ENCODE measurements at regions of chr5 and their contacts with region 1.

Region 1: GRCh38 chr5:150129813-150130492 is 25.7 kb downstream of the PDGFRB start:
- DNase-seq: peak; percentile 80 to 88 (median 86)
- H3K4me3 ChIP-seq: no peak overlapping the region
- H3K27ac ChIP-seq: peak overlapping the region in 1 of 2 donors; percentile 1
- H3K4me1 ChIP-seq: peaks cover 9% of the 10 kb centered on the region
- H3K27me3 ChIP-seq: no peaks in the 10 kb centered on the region
- CTCF ChIP-seq: peak; percentile 84 to 96 (median 96)
- EP300 ChIP-seq: no peak
- POLR2A ChIP-seq: no peak

Region 2: DNA sequence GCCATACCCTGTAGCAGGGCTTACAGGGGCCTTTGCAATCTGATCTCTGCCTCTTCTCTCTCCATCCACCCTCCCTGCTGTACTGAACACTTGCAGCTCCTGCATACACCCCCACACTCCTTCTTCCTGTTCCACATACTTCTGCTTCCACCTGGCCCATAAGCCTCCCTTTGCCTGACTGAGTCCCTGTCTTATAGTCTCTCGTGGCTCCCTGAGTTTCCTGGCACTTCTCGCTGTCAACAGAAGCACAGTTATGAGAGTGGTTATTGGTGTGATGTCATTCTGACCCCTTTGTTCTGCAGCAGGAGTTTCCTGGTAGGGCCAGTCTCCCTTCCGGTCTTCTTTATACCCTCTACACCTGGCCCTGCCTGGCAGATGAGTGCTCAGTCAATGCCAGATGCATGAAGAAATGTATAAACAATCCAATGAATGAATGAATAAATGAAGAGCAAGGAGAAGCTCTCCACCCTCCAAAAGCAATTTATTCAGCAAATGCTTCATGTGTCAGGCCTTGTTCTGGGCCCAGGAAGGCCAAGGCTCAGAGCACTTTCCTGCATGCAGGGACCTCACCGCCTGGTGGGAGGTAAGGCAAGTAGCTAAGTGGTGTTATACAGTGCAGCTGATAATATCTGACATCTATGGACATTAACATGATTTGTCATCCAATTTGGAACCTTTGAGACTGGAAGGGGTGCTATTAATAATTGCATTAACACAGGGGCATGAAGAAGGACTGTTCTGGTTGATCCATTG is 23.1 kb before region 1 on chr5:
- intact Hi-C with region 1: no loop called
- DNase-seq: peak in 1 of 5 donors; percentile 19
- H3K4me3 ChIP-seq: no peak overlapping the region
- H3K27ac ChIP-seq: no peak overlapping the region
- H3K4me1 ChIP-seq: no peaks in the 10 kb centered on the region
- H3K27me3 ChIP-seq: no peaks in the 10 kb centered on the region
- CTCF ChIP-seq: no peak
- EP300 ChIP-seq: no peak
- POLR2A ChIP-seq: no peak

Region 3: DNA sequence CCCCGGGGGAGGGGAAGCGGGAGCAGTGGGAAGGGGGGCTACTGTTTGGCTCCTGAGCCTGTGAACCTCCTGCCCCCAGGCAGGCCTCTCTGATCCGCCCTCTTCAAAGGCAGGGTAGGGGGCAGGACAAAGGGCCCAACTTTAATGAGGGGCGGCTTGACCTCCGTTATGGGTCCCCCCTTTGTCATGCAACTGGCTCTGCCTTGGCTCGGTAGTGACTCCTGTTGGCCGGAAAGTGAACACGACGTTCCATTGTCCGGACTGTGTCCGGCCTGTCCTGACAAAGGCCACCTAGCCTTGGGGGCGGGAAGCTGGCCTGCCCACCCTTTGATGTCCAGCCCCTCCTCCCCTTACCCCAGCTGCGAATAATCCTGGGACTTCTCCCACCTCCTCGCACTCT is 38.0 kb after region 1 on chr5:
- intact Hi-C with region 1: loop called in 3 of 4 experiments (anchors 5 kb)
- DNase-seq: no peak
- H3K4me3 ChIP-seq: no peak overlapping the region
- H3K27ac ChIP-seq: no peak overlapping the region
- H3K4me1 ChIP-seq: peaks cover 12% of the 10 kb centered on the region
- H3K27me3 ChIP-seq: no peaks in the 10 kb centered on the region
- CTCF ChIP-seq: no peak
- EP300 ChIP-seq: no peak
- POLR2A ChIP-seq: no peak

Region 4: GRCh38 chr5:150217873-150218692 is 88.1 kb after region 1 on chr5:
- intact Hi-C with region 1: loop called (anchors 1 to 2 kb)
- DNase-seq: peak; percentile 78 to 90 (median 88)
- H3K4me3 ChIP-seq: no peak overlapping the region
- H3K27ac ChIP-seq: no peak overlapping the region
- H3K4me1 ChIP-seq: peaks cover 2% of the 10 kb centered on the region
- H3K27me3 ChIP-seq: no peaks in the 10 kb centered on the region
- CTCF ChIP-seq: peak; percentile 64 to 96 (median 95)
- EP300 ChIP-seq: no peak
- POLR2A ChIP-seq: no peak

Region 5: DNA sequence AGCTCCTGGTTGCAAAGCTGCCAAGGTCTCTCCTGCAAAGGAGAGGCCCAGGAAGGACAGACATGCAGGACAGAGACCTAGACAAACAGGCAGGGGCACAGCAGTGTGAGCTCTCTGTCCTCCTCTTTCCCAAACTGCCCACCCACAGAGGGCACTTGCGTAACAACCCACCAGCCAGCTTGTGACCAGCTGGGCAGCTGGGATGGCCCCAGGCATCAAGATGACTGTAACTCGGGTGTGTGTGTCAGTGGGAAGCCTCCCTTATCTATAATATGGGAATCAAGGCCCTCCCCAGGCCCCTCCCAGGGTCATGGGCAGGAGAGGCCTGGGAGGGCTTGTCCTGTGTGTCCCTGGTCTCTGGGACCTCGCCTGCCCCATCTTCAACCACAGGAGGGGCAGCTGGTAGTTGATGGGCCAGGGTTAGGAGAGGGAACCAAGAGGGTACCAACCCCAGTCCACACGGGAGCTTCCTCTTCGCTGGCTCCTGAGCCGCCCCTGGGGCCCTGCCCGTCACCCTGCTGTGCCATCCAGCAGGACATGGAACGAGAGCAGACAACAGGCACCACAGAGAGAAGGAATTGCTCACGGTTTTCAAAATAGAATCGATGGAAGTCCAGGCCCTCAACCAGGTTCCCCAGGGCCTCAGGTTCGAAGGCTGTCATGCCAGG is 97.8 kb after region 1 on chr5:
- intact Hi-C with region 1: loop called in 1 of 4 experiments (anchors 2 kb)
- DNase-seq: no peak
- H3K4me3 ChIP-seq: no peak overlapping the region
- H3K27ac ChIP-seq: no peak overlapping the region
- H3K4me1 ChIP-seq: no peaks in the 10 kb centered on the region
- H3K27me3 ChIP-seq: no peaks in the 10 kb centered on the region
- CTCF ChIP-seq: no peak
- EP300 ChIP-seq: no peak
- POLR2A ChIP-seq: no peak

Region 6: DNA sequence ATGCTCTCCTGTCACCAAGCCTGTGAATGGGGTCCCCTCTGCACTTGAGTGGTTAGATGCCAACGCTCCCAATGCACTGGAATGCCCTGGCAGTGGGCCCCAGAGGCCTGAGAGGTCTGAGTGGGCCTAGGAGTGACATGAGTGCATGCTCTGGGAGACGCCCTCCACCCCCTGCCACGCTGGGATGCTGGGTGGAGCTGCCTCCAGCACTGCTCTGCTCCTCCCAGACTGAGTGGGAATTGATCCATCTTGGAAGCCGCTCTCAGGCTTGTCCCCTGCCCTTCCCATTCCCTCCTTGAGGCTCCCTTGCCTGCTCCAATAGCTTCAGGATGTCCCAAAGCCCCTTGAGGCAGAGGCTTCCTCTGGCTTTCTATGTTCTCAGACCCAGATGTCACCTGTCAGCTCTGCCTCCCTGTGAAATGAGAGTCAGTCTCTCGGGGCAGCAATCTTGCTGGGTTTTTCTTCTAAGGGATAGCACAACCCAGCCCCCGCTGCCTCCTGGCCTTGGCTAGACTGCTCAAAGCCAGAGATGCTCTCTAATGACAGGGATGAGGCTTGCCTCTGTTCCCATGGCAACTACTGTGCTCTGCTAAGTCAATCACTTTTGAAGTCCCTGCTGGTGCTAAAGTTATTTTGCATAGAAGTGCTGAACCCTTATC is 179.4 kb after region 1 on chr5:
- intact Hi-C with region 1: no loop called
- DNase-seq: no peak
- H3K4me3 ChIP-seq: no peak overlapping the region
- H3K27ac ChIP-seq: no peak overlapping the region
- H3K4me1 ChIP-seq: no peaks in the 10 kb centered on the region
- H3K27me3 ChIP-seq: no peaks in the 10 kb centered on the region
- CTCF ChIP-seq: no peak
- EP300 ChIP-seq: no peak
- POLR2A ChIP-seq: no peak

Region 7: DNA sequence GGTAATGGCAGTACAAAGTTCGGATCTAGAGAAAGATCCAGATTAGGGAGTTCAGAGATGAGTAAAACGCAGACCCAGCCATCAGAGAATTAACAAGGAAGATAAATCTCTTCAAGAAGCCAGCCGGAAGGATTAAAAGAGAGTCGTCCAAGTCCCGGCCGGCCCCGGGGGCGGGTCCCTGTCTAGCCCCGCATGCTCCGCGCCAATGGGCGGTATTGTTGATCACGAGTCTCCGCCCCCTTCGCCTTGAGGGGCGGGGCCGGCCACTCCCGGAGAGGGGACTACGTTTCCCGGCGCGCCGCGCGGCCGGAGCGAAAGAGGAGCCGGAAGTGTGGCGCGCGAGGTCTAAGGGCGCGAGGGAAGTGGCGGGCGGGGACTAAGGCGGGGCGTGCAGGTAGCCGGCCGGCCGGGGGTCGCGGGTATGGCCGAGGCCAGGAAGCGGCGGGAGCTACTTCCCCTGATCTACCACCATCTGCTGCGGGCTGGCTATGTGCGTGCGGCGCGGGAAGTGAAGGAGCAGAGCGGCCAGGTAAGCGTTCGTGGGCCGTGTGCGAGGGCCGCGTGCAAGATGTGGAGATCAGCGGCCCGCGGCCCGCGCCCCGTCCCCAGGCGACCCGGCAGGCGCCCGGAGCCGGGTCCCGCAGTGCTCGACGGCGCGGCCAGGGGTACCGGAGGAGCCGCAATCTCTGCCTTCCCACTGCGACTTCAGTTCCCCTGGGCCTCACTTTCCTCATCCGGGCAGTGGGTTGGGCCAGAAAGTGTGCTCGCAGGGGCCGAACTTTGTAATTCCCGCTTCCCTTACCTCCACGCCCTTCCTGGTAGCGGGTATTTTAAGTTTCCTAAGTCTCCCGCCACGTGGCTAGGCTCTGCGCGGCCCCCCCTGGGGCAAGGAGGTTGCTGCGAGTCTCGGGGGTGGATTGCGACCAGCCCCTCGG is 227.6 kb after region 1 on chr5 and contains the start of gene TCOF1:
- intact Hi-C with region 1: loop called in 1 of 4 experiments (anchors 10 kb)
- DNase-seq: peak; percentile 95 to 98 (median 97)
- H3K4me3 ChIP-seq: peak within 1 kb of the TSS; percentile 73
- H3K27ac ChIP-seq: no peak within 1 kb of the TSS
- H3K4me1 ChIP-seq: peaks cover 5% of the 10 kb centered on the region
- H3K27me3 ChIP-seq: no peaks in the 10 kb centered on the region
- CTCF ChIP-seq: no peak
- EP300 ChIP-seq: no peak
- POLR2A ChIP-seq: peak; percentile 22
- total RNA-seq, gene TCOF1: 16.9 to 38.3 (median 31.2) TPM

Region 8: GRCh38 chr5:150436141-150436680 is 306.3 kb after region 1 on chr5:
- intact Hi-C with region 1: loop called in 2 of 4 experiments (anchors 10 kb)
- DNase-seq: peak; percentile 85 to 92 (median 89)
- H3K4me3 ChIP-seq: no peak overlapping the region
- H3K27ac ChIP-seq: no peak overlapping the region
- H3K4me1 ChIP-seq: no peaks in the 10 kb centered on the region
- H3K27me3 ChIP-seq: no peaks in the 10 kb centered on the region
- CTCF ChIP-seq: peak; percentile 69 to 82 (median 71)
- EP300 ChIP-seq: no peak
- POLR2A ChIP-seq: no peak

Region 9: GRCh38 chr5:150449517-150450339 is 319.8 kb after region 1 on chr5 and contains the start of gene RPS14:
- intact Hi-C with region 1: loop called in 1 of 4 experiments (anchors 10 kb)
- DNase-seq: peak; percentile 93 to 96 (median 95)
- H3K4me3 ChIP-seq: peak within 1 kb of the TSS; percentile 73
- H3K27ac ChIP-seq: peak within 1 kb of the TSS; percentile 82 to 94
- H3K4me1 ChIP-seq: peaks cover 3% of the 10 kb centered on the region
- H3K27me3 ChIP-seq: no peaks in the 10 kb centered on the region
- CTCF ChIP-seq: peak; percentile 95 to 98 (median 97)
- EP300 ChIP-seq: peak; percentile 31
- POLR2A ChIP-seq: peak; percentile 83
- total RNA-seq, gene RPS14: 2,727 to 9,295 (median 4,211) TPM